ENCODE measurements at regions of chr19 and their contacts with region 1.

Region 1: DNA sequence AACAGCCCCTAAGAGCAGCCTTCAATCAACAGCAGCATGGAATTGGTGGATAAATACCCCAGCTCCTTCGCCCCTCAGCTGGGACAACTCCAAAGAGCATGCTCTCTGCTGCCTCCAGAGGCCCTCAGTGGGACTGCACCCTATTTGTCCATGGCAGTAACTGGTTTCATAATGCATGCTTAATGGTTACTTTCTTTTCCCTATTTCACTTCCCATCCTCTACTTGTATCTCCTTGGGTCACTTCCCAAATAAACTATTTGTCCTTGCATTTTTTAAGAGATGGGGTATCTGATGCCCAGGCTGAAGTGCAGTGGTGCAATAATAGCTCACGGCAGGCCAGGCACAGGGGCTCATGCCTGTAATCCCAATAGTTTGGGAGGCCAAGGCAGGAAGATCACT is 13.5 kb upstream of the TPM4 start:
- DNase-seq: peak; percentile 73
- H3K4me3 ChIP-seq: no peak overlapping the region
- H3K27ac ChIP-seq: no peak overlapping the region
- H3K4me1 ChIP-seq: no peaks in the 10 kb centered on the region; a peak in 1 of 4 replicates
- H3K27me3 ChIP-seq: no peaks in the 10 kb centered on the region; the same call in 1 of the 2 replicates
- CTCF ChIP-seq: peak; percentile 90
- EP300 ChIP-seq: no peak
- RAD21 ChIP-seq: peak; percentile 36; the same call in 1 of the 2 replicates

Region 2: DNA sequence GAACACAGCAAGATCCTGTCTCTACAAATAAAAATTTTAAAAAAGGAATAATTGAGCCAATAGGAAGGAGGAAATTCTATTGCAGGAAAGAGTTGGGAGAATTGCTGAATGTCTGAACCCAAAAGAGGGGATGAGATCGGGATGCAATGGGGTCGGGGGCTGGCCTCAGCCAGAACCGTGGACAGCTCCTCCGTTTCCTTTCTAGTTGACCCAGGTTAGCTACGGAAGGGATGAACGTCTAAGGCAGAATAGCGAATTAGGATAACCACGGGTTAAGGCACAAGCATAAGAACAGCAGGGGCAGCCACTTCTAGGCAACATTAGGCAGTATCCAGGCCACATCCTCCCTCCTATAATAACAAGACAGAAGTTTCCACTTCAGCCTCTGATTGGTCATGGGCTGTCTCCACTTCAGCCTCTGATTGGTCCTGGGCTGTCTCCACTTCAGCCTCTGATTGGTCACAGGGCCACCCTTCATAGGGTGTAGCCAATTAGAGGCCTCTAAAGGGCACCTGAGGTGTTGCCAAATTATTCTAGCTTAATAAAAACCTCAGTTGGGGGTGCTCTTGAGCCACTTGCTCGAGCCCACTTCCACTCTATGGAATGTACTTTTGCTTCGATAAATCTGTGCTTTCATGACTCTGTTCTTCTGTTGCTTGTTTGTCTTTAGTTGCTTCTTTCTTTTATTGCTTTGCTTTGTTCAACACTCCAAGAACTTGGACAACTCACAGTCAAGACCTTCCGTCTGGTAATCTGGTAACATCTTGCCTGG is 11.3 kb before region 1 on chr19:
- CTCF ChIA-PET with region 1: interaction called, 22 read pairs
- POLR2A ChIA-PET with region 1: no interaction called
- DNase-seq: no peak
- H3K4me3 ChIP-seq: no peak overlapping the region
- H3K27ac ChIP-seq: no peak overlapping the region
- H3K4me1 ChIP-seq: no peaks in the 10 kb centered on the region
- H3K27me3 ChIP-seq: peaks cover 31% of the 10 kb centered on the region; the same call in 1 of the 2 replicates
- CTCF ChIP-seq: no peak
- EP300 ChIP-seq: no peak
- RAD21 ChIP-seq: no peak

Region 3: DNA sequence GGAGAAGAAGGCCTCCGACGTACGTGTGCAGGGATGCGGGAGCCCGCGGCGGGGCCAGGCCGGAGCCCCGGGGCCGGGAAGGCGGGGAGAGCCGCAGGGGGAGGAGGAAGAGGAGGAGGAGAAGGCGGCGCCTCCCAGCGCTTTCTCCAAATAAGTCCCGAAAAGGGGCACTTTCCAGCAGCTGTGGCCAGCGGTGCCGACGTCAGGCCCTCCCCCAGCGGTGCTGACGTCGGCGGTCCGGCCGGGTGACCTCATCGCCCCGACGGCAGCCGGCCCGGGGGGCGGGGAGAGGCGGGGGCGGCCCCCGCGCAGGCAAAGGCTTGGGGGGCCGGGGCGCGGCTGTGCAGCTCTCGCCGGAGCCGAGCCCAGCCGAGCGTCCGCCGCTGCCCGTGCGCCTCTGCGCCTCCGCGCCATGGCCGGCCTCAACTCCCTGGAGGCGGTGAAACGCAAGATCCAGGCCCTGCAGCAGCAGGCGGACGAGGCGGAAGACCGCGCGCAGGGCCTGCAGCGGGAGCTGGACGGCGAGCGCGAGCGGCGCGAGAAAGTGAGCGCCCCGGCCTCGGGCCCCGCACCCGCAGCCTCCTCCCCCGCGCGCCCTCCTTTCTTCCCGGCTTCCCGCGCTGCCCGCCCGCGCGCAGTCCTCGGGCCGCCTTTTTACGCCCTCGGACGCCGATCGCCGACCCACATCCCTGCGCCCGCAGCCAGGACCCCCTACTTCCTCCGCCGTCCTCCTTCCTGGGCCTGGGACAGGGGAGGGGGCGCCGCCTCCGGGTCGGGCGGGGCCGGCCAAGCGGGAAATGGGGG is 13.6 kb after region 1 on chr19 and contains the start of gene TPM4:
- CTCF ChIA-PET with region 1: interaction called, 90 read pairs
- POLR2A ChIA-PET with region 1: interaction called, 3 read pairs
- DNase-seq: peak; percentile 86
- H3K4me3 ChIP-seq: peak within 1 kb of the TSS; percentile 74 to 78
- H3K27ac ChIP-seq: peak within 1 kb of the TSS; percentile 99
- H3K4me1 ChIP-seq: peaks cover 12 to 14% of the 10 kb centered on the region in 2 experiments
- H3K27me3 ChIP-seq: no peaks in the 10 kb centered on the region
- CTCF ChIP-seq: no peak
- EP300 ChIP-seq: no peak
- RAD21 ChIP-seq: no peak
- polyA plus RNA-seq, gene TPM4: 415 and 440 TPM in 2 replicates

Region 4: DNA sequence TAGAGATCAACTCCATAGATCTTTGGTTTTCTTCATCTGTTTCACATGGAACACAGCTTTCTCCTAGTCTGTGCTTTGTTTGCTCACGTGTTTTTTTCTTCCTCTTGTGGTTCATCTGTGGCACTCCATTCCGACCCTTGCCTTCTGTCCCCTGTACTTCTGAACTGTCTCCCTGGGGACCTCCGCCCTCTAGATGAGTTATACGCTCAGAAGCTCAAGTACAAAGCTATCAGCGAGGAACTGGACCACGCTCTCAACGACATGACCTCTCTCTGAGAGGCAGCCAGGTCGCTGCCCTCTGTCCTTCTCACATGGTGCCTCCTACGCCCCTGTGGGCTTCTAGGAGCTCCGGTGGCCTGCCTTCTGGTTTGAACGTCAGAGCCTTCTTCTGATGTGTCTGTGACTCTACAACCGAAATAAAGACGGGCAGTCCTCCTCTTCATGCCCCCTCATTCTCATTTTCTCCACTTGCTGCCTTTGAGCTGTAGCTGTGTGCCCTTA is 32.3 kb after region 1 on chr19:
- CTCF ChIA-PET with region 1: interaction called, 15 read pairs
- POLR2A ChIA-PET with region 1: interaction called, 4 read pairs
- DNase-seq: no peak
- H3K4me3 ChIP-seq: no peak overlapping the region
- H3K27ac ChIP-seq: no peak overlapping the region
- H3K4me1 ChIP-seq: no peaks in the 10 kb centered on the region
- H3K27me3 ChIP-seq: no peaks in the 10 kb centered on the region
- CTCF ChIP-seq: no peak
- EP300 ChIP-seq: no peak
- RAD21 ChIP-seq: no peak

Region 5: DNA sequence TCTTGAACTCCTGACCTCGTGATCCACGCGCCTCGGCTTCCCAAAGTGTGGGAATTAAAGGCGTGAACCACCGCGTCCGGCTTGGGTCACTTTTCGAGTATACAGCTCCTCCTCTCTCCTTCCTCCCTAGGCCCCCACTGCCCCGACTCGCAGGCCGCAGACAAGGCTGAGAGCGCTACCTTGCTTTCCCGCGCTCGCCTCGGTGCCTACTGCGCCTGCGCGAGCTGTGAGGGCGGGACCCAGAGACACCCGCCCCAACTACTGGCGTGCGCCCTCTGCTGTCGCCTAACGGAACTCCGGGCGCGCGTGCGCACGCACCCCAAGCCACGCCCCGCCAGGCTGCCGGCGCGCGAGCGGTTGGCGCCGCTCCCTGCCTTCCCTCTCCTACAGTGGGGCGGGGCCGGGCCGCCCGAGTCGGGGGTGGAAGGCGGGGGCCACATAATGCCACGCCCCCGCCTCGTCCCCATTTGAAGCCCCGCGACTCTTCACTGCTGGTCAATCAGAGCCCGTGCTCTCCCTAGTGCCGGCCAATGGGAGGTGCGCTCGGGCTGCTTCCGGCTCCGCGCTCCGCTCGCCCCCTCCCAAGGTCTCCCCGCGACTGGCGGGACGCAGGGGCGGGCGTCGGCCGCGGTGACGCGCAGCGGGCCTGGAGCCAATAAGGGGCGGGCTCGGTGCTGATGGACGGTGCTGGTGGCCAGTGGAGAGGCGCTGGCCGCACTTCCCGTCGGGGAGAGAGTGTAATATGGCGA is 48.5 kb after region 1 on chr19 and contains the start of gene RAB8A:
- CTCF ChIA-PET with region 1: interaction called, 22 read pairs
- POLR2A ChIA-PET with region 1: no interaction called
- DNase-seq: peak; percentile 99
- H3K4me3 ChIP-seq: peak within 1 kb of the TSS; percentile 82 to 100
- H3K27ac ChIP-seq: peak within 1 kb of the TSS; percentile 66 to 74
- H3K4me1 ChIP-seq: peaks cover 9 to 10% of the 10 kb centered on the region in 2 experiments
- H3K27me3 ChIP-seq: no peaks in the 10 kb centered on the region
- CTCF ChIP-seq: peak; percentile 71
- EP300 ChIP-seq: no peak
- RAD21 ChIP-seq: peak; percentile 62
- polyA plus RNA-seq, gene RAB8A: 55.2 and 58.0 TPM in 2 replicates